ENCODE measurements at regions of chr17 and their contacts with region 1.

Region 1: GRCh38 chr17:65455972-65456343 is 105.5 kb downstream of the AXIN2 start:
- DNase-seq: no peak
- H3K4me3 ChIP-seq: no peak overlapping the region
- H3K27ac ChIP-seq: no peak overlapping the region
- H3K4me1 ChIP-seq: no peaks in the 10 kb centered on the region
- H3K27me3 ChIP-seq: no peaks in the 10 kb centered on the region
- CTCF ChIP-seq: peak in 1 of 2 donors; percentile 29

Region 2: GRCh38 chr17:65794572-65794971 is 338.6 kb after region 1 on chr17:
- CTCF ChIA-PET with region 1: no interaction called
- dilution Hi-C with region 1: no loop called
- in situ Hi-C with region 1: no loop called
- intact Hi-C with region 1: loop called (anchors 5 kb)
- DNase-seq: peak; percentile 29
- H3K4me3 ChIP-seq: no peak overlapping the region
- H3K27ac ChIP-seq: no peak overlapping the region
- H3K4me1 ChIP-seq: no peaks in the 10 kb centered on the region
- H3K27me3 ChIP-seq: no peaks in the 10 kb centered on the region
- CTCF ChIP-seq: peak; percentile 46 to 75